Activated B cell treated with CpG ODN at 0.5 μM for 24 hours (primary cell): ENCODE measurements at regions of chr2 and their contacts with region 1.

Region 1: DNA sequence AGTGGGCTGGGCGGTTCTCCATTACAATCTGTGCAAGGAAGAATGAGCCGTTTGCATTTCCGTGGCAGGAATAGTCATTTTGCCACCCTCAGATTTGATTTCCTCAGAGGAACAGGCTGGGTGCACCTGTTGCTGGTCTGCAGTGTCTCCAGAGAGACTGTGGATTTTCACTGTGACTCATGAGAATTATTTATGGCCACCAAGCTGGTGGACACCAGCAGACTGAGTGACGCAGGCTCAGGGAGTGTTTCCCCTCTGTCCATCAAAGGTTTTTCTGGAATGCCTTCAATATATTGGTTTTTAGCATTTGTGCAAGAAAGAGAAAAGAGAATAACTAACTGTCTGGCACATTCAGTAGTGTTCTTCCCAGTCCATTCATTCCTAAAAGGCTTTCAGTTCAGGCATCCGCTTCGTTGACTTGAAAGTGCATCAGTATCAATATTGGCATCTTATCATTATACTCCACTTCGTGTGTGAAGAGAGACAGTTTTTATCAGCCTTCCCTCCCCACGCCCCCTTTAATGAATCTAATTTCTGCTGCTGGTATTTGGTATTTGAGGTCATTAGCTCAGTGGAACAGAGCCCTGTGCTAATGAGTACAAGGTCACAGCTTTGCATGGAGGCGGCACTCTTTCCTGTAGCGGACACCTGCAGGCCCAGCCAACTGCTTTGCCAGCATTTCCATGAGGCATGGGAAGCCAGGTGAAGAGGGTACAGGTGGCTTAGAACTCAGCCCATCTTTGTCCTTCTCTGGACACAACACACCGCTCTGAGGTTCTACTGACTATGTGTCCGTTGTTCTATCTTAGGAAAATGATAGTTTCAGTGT is 39.9 kb downstream of the PRKCE start:
- DNase-seq: no peak
- ATAC-seq: peak; percentile 45
- H3K4me3 Mint-ChIP-seq: peak overlapping the region; percentile 64
- H3K27ac Mint-ChIP-seq: peak overlapping the region; percentile 70
- H3K4me1 Mint-ChIP-seq: peaks cover 54% of the 10 kb centered on the region
- H3K27me3 Mint-ChIP-seq: no peaks in the 10 kb centered on the region
- CTCF ChIP-seq: no peak

Region 2: DNA sequence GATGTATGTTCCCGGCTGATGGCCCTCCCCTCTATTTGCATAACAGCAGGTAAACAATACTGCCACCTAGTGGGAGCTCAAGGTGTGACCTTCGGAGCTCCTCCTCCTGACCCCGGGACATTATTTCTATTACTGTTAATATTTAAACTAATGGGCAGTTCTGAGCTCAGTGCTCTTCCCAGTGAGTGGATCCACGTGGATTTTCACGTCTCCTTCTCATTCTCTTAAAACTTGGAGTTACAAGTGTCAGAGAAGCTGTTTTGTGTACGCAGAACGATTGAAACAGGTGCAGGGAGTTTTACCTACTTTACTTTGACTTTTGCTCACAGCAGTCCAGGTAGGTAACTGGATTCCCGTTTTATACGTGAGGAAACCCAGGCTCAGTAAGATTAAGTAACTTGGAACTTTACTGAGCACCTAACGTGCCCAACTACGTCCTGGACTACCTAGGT is 87.4 kb after region 1 on chr2:
- CTCF ChIA-PET with region 1: interaction called, 11 read pairs
- POLR2A ChIA-PET with region 1: interaction called, 3 read pairs
- intact Hi-C with region 1: loop called (anchors 2 kb)
- DNase-seq: peak; percentile 35
- ATAC-seq: peak; percentile 83
- H3K4me3 Mint-ChIP-seq: peak overlapping the region; percentile 44
- H3K27ac Mint-ChIP-seq: peak overlapping the region; percentile 39
- H3K4me1 Mint-ChIP-seq: peaks cover 76% of the 10 kb centered on the region
- H3K27me3 Mint-ChIP-seq: no peaks in the 10 kb centered on the region
- CTCF ChIP-seq: no peak